Activated CD4-positive, alpha-beta T cell treated with anti-CD3 and anti-CD28 coated beads for 36 hours (primary cell): ENCODE measurements at regions of chr17 and their contacts with region 1.

Region 1: DNA sequence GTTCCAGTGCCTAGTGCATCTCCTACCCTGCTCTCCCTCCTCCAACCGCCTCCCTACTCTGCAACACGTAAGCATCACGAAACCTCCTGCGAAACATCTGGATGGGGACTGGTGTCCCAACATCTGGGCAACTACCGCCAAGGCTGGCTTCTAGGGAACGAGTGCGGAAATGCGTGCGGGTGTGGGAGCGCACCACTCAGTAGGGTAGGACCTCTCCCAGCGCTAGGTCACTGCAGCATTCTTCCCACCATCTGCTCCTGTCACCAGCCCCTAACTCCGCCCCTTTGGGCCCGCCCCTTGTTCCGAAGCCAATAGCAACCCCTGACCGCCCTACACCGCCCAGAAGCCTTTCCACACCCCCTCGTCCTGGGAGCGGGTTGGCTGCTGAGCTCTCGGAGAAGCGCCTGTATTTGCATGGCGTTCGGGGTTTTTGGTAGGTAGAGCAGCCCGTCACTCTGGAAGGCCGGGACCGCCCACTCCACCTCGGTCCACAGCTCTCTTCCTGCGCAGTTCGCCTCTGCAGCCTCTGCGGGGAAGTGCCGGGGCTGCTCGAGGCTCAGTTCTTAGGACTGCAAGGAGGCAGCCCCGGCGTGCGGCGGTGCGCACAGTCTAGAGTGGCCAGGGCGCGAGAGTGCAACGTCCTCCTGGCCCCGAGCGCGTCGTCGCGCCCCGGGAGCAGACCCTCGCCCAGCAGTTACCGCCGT is at the start of gene HS3ST3B1:
- DNase-seq: peak; percentile 100
- ATAC-seq: peak; percentile 92
- H3K4me3 Mint-ChIP-seq: peak within 1 kb of the TSS; percentile 81
- H3K27ac Mint-ChIP-seq: peak within 1 kb of the TSS; percentile 90
- H3K4me1 Mint-ChIP-seq: peaks cover 54% of the 10 kb centered on the region
- H3K27me3 Mint-ChIP-seq: peaks cover 30% of the 10 kb centered on the region
- total RNA-seq, gene HS3ST3B1: 5.0 to 5.7 TPM

Region 2: GRCh38 chr17:13017659-13018459 is 1282.9 kb before region 1 on chr17 and contains the start of gene ELAC2:
- CTCF ChIA-PET with region 1: no interaction called
- POLR2A ChIA-PET with region 1: no interaction called
- intact Hi-C with region 1: loop called (anchors 2 to 5 kb)
- DNase-seq: peak; percentile 98
- ATAC-seq: peak; percentile 96
- H3K4me3 Mint-ChIP-seq: peak within 1 kb of the TSS; percentile 95
- H3K27ac Mint-ChIP-seq: peak within 1 kb of the TSS; percentile 98
- H3K4me1 Mint-ChIP-seq: peaks cover 31% of the 10 kb centered on the region
- H3K27me3 Mint-ChIP-seq: no peaks in the 10 kb centered on the region
- total RNA-seq, gene ELAC2: 67.4 to 96.6 TPM

Region 3: GRCh38 chr17:13813347-13814240 is 487.1 kb before region 1 on chr17:
- CTCF ChIA-PET with region 1: no interaction called
- POLR2A ChIA-PET with region 1: no interaction called
- intact Hi-C with region 1: no loop called
- DNase-seq: no peak
- ATAC-seq: no peak
- H3K4me3 Mint-ChIP-seq: no peak overlapping the region
- H3K27ac Mint-ChIP-seq: no peak overlapping the region
- H3K4me1 Mint-ChIP-seq: peaks cover 3% of the 10 kb centered on the region
- H3K27me3 Mint-ChIP-seq: no peaks in the 10 kb centered on the region

Region 4: GRCh38 chr17:13835151-13835550 is 465.6 kb before region 1 on chr17:
- CTCF ChIA-PET with region 1: no interaction called
- POLR2A ChIA-PET with region 1: no interaction called
- intact Hi-C with region 1: loop called in 1 of 2 experiments (anchors 10 kb)
- DNase-seq: no peak
- ATAC-seq: no peak
- H3K4me3 Mint-ChIP-seq: no peak overlapping the region
- H3K27ac Mint-ChIP-seq: no peak overlapping the region
- H3K4me1 Mint-ChIP-seq: peaks cover 3% of the 10 kb centered on the region
- H3K27me3 Mint-ChIP-seq: no peaks in the 10 kb centered on the region

Region 5: GRCh38 chr17:14196377-14196997 is 104.2 kb before region 1 on chr17:
- CTCF ChIA-PET with region 1: interaction called, 4 read pairs
- POLR2A ChIA-PET with region 1: no interaction called
- intact Hi-C with region 1: loop called in 1 of 2 experiments (anchors 2 kb)
- DNase-seq: no peak
- ATAC-seq: peak; percentile 19
- H3K4me3 Mint-ChIP-seq: no peak overlapping the region
- H3K27ac Mint-ChIP-seq: peak overlapping the region; percentile 68
- H3K4me1 Mint-ChIP-seq: peaks cover 85% of the 10 kb centered on the region
- H3K27me3 Mint-ChIP-seq: no peaks in the 10 kb centered on the region

Region 6: GRCh38 chr17:14389681-14390080 is 89.0 kb after region 1 on chr17:
- CTCF ChIA-PET with region 1: no interaction called
- POLR2A ChIA-PET with region 1: no interaction called
- intact Hi-C with region 1: no loop called
- DNase-seq: no peak
- ATAC-seq: no peak
- H3K4me3 Mint-ChIP-seq: no peak overlapping the region
- H3K27ac Mint-ChIP-seq: no peak overlapping the region
- H3K4me1 Mint-ChIP-seq: no peaks in the 10 kb centered on the region
- H3K27me3 Mint-ChIP-seq: no peaks in the 10 kb centered on the region

Region 7: GRCh38 chr17:14427900-14428647 is 127.3 kb after region 1 on chr17:
- CTCF ChIA-PET with region 1: interaction called, 3 read pairs
- POLR2A ChIA-PET with region 1: interaction called, 5 read pairs
- intact Hi-C with region 1: loop called (anchors 1 to 5 kb)
- DNase-seq: peak; percentile 72
- ATAC-seq: peak; percentile 97
- H3K4me3 Mint-ChIP-seq: peak overlapping the region; percentile 63
- H3K27ac Mint-ChIP-seq: peak overlapping the region; percentile 97
- H3K4me1 Mint-ChIP-seq: peaks cover 59% of the 10 kb centered on the region
- H3K27me3 Mint-ChIP-seq: no peaks in the 10 kb centered on the region

Region 8: GRCh38 chr17:14926526-14927122 is 625.9 kb after region 1 on chr17:
- CTCF ChIA-PET with region 1: interaction called, 3 read pairs
- POLR2A ChIA-PET with region 1: no interaction called
- intact Hi-C with region 1: loop called (anchors 5 kb)
- DNase-seq: peak; percentile 67
- ATAC-seq: no peak
- H3K4me3 Mint-ChIP-seq: no peak overlapping the region
- H3K27ac Mint-ChIP-seq: no peak overlapping the region
- H3K4me1 Mint-ChIP-seq: no peaks in the 10 kb centered on the region
- H3K27me3 Mint-ChIP-seq: peaks cover 12% of the 10 kb centered on the region

Region 9: GRCh38 chr17:15106540-15106939 is 805.8 kb after region 1 on chr17:
- CTCF ChIA-PET with region 1: no interaction called
- POLR2A ChIA-PET with region 1: no interaction called
- intact Hi-C with region 1: no loop called
- DNase-seq: no peak
- ATAC-seq: no peak
- H3K4me3 Mint-ChIP-seq: no peak overlapping the region
- H3K27ac Mint-ChIP-seq: no peak overlapping the region
- H3K4me1 Mint-ChIP-seq: no peaks in the 10 kb centered on the region
- H3K27me3 Mint-ChIP-seq: no peaks in the 10 kb centered on the region